ENCODE measurements at regions of chr13 and their contacts with region 1.

Region 1: GRCh38 chr13:30158774-30159445 is 148.4 kb downstream of the KATNAL1 start:
- DNase-seq: peak; percentile 44
- ATAC-seq: peak; percentile 63
- H3K4me3 Mint-ChIP-seq: no peak overlapping the region
- H3K27ac Mint-ChIP-seq: peak overlapping the region; percentile 65
- H3K4me1 Mint-ChIP-seq: peaks cover 48% of the 10 kb centered on the region
- H3K27me3 Mint-ChIP-seq: no peaks in the 10 kb centered on the region

Region 2: GRCh38 chr13:30142486-30143211 is 16.3 kb before region 1 on chr13:
- CTCF ChIA-PET with region 1: interaction called, 45 read pairs
- POLR2A ChIA-PET with region 1: interaction called, 3 read pairs
- intact Hi-C with region 1: loop called in 1 of 2 experiments (anchors 1 kb)
- DNase-seq: peak; percentile 66
- ATAC-seq: peak; percentile 49
- H3K4me3 Mint-ChIP-seq: no peak overlapping the region
- H3K27ac Mint-ChIP-seq: peak overlapping the region; percentile 84
- H3K4me1 Mint-ChIP-seq: peaks cover 62% of the 10 kb centered on the region
- H3K27me3 Mint-ChIP-seq: no peaks in the 10 kb centered on the region

Region 3: GRCh38 chr13:30148171-30148754 is 10.6 kb before region 1 on chr13:
- CTCF ChIA-PET with region 1: interaction called, 45 read pairs
- POLR2A ChIA-PET with region 1: interaction called, 3 read pairs
- intact Hi-C with region 1: loop called (anchors 1 kb)
- DNase-seq: peak; percentile 51
- ATAC-seq: peak; percentile 42
- H3K4me3 Mint-ChIP-seq: no peak overlapping the region
- H3K27ac Mint-ChIP-seq: peak overlapping the region; percentile 87
- H3K4me1 Mint-ChIP-seq: peaks cover 93% of the 10 kb centered on the region
- H3K27me3 Mint-ChIP-seq: no peaks in the 10 kb centered on the region

Region 4: DNA sequence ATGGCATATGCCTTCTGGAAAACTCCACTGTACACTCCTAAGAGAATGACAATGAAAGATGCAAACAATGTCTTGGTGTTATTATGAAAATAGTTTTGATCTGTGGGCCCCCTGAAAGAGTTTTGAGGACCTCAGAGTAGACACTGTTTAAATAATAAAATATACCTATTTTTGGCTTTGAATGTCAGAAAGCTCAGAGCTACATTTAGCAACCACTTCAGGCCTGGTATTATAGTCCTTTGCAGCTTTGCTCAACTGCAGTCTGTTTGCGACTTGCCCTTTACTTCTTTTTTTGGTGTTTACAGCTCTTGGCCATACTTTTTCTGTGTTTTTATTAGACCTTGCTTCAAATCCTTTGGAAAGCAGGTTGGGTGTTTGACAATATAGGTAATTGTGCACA is 257.6 kb after region 1 on chr13:
- CTCF ChIA-PET with region 1: no interaction called
- POLR2A ChIA-PET with region 1: interaction called, 10 read pairs
- intact Hi-C with region 1: no loop called
- DNase-seq: no peak
- ATAC-seq: no peak
- H3K4me3 Mint-ChIP-seq: no peak overlapping the region
- H3K27ac Mint-ChIP-seq: no peak overlapping the region
- H3K4me1 Mint-ChIP-seq: peaks cover 25% of the 10 kb centered on the region
- H3K27me3 Mint-ChIP-seq: no peaks in the 10 kb centered on the region